K562 (cell line): ENCODE measurements at regions of chr1 and their contacts with region 1.

Region 1: GRCh38 chr1:179002552-179003345 is 22.9 kb upstream of the FAM20B start:
- DNase-seq: peak; percentile 72 to 88 (median 80)
- ATAC-seq: peak; percentile 92
- H3K4me3 ChIP-seq: no peak overlapping the region
- H3K27ac ChIP-seq: no peak overlapping the region; the same call in 2 of the 3 replicates
- H3K4me1 ChIP-seq: peaks cover 6 to 11% of the 10 kb centered on the region in 2 experiments; a peak in 4 of 5 replicates
- H3K27me3 ChIP-seq: no peaks in the 10 kb centered on the region
- CTCF ChIP-seq: peak; percentile 95 to 99 (median 97)
- EP300 ChIP-seq: no peak
- POLR2A ChIP-seq: no peak
- RAD21 ChIP-seq: peak; percentile 96 to 98

Region 2: DNA sequence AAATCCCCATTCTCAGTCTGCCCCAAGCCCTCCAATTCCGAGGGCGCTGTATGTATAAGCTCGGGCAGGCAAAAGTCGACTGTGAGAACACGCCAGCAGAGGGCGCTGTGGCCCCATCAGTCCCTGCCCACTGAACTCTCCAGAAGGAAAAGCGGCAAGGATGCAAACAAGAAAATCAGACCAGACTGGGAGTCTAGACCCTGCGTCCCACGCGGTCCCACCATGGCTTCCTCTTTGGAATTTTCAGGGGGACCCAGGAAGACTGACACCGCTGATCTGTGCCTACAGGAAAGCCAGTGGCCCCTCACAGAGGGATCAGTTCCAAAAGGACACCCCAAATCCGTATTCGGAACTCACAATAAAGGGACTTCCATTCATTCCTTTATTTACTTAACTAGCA is 470.4 kb before region 1 on chr1:
- CTCF ChIA-PET with region 1: interaction called, 9 read pairs
- POLR2A ChIA-PET with region 1: interaction called, 3 read pairs
- in situ Hi-C with region 1: loop called (anchors 10 kb)
- intact Hi-C with region 1: loop called (anchors 2 kb)
- DNase-seq: peak; percentile 84 to 89 (median 87)
- ATAC-seq: peak; percentile 98
- H3K4me3 ChIP-seq: no peak overlapping the region
- H3K27ac ChIP-seq: no peak overlapping the region
- H3K4me1 ChIP-seq: no peaks in the 10 kb centered on the region
- H3K27me3 ChIP-seq: peaks cover 4 to 38% of the 10 kb centered on the region in 2 experiments; a peak in 4 of 5 replicates
- CTCF ChIP-seq: peak; percentile 90 to 97 (median 92)
- EP300 ChIP-seq: no peak
- POLR2A ChIP-seq: no peak
- RAD21 ChIP-seq: peak; percentile 81 to 89

Region 3: GRCh38 chr1:178768423-178768822 is 234.3 kb before region 1 on chr1:
- CTCF ChIA-PET with region 1: interaction called, 4 read pairs
- POLR2A ChIA-PET with region 1: interaction called, 4 read pairs
- in situ Hi-C with region 1: loop called (anchors 5 kb)
- intact Hi-C with region 1: loop called (anchors 1 kb)
- DNase-seq: peak; percentile 58 to 64 (median 62)
- ATAC-seq: peak; percentile 88
- H3K4me3 ChIP-seq: no peak overlapping the region
- H3K27ac ChIP-seq: no peak overlapping the region
- H3K4me1 ChIP-seq: no peaks in the 10 kb centered on the region
- H3K27me3 ChIP-seq: no peaks in the 10 kb centered on the region
- CTCF ChIP-seq: peak; percentile 78 to 93 (median 93)
- EP300 ChIP-seq: no peak
- POLR2A ChIP-seq: no peak
- RAD21 ChIP-seq: peak; percentile 74 to 81

Region 4: DNA sequence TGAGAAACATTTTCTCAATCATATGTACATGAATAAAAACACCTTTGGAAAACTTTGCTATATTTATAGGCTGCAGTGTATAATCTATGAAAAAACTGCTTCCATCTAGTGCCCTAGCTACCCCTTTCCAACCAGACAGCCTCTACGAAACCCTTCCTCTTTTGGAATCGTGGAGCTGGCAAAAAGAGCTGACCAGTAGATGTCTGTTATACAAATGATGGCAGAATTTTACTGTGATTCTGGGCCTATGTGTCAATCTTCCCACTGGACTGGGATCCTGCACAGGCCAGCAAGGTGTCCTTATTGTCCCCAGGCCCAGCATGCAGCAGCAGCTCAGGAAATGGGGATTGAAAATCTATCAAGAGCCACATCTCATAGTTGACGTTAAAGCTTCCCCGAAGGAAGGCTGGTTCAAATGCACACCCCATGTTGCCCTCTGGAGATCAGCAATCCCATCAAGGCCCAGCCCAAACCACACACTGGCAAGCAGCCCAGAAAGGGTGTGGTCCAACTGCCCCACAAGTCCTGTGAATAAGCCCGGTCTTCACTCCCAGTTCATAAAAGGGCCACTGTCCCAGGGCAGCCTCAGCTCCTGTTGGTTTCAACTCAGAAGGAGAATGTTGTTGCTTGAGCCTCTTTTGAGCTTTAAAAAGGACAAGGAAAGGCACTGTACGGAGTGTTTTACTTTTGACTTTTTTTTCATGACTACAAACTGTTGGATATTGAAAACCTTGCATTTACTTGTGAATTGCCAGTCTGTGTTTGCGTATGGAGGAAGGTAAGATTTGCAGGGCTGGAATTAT is 14.2 kb after region 1 on chr1:
- CTCF ChIA-PET with region 1: no interaction called
- POLR2A ChIA-PET with region 1: interaction called, 13 read pairs
- in situ Hi-C with region 1: no loop called
- intact Hi-C with region 1: no loop called
- DNase-seq: peak; percentile 87 to 99 (median 91)
- ATAC-seq: peak; percentile 91
- H3K4me3 ChIP-seq: peak overlapping the region; percentile 21
- H3K27ac ChIP-seq: peak overlapping the region; percentile 67
- H3K4me1 ChIP-seq: peaks cover 39 to 43% of the 10 kb centered on the region in 2 experiments
- H3K27me3 ChIP-seq: no peaks in the 10 kb centered on the region
- CTCF ChIP-seq: no peak; a peak in 1 of 6 replicates
- EP300 ChIP-seq: peak; percentile 91
- POLR2A ChIP-seq: peak; percentile 71
- RAD21 ChIP-seq: peak in 1 of 2 experiments; percentile 10; a peak in 1 of 4 replicates